WTC11 (cell line): ENCODE measurements at regions of chr14 and their contacts with region 1.

Region 1: DNA sequence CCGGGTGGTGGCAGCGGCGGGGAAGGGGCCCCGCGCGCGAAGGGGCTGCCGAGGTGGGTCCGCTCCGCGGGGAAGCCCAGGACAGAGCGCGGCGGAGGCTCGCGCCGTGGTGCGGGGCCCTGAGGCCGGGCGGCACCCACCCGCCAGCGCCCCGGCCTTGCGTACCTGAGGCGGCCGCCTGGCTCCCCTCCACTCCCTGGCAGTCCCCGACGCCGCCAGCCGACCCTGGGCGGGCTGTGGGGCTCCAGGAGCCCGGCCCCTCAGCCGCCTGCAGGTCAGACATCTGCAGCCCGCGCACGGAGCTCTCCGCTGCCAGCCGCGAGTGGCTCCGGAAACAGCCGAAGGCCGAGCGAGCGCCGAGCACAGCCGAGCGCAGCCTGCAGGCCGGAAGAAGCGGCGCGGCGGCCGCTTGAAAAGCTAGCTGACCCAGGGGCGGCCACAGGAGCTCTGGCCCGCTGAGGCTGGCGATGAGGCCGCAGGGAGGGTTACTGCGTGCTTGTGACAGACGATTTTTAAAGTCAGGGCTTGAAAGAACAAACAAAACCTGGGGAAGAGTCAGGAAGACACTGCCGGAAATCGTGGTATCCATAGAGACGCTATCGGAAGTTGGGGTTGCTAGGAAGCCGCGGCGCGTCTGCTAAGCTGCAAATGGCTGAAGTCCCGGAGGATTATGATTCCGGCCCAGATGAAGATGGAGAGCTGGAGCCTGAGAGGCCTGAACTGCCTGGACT is at the starts of genes SAMD15 and TMED8:
- DNase-seq: peak; percentile 85
- ATAC-seq: peak; percentile 99
- H3K4me3 Mint-ChIP-seq: peak within 1 kb of the TSS; percentile 85
- H3K27ac Mint-ChIP-seq: no peak within 1 kb of the TSS
- H3K4me1 Mint-ChIP-seq: peaks cover 9% of the 10 kb centered on the region
- H3K27me3 Mint-ChIP-seq: no peaks in the 10 kb centered on the region
- CTCF ChIP-seq: no peak
- total RNA-seq, gene SAMD15: 0.27 to 0.42 TPM (median 0.30 TPM) in 3 replicates
- total RNA-seq, gene TMED8: 12.8 to 14.2 TPM (median 13.4 TPM) in 3 replicates

Region 2: GRCh38 chr14:77320238-77320935 is 56.5 kb before region 1 on chr14 and contains the start of gene POMT2:
- CTCF ChIA-PET with region 1: interaction called, 19 read pairs
- POLR2A ChIA-PET with region 1: interaction called, 5 read pairs
- DNase-seq: peak; percentile 98
- ATAC-seq: peak; percentile 64
- H3K4me3 Mint-ChIP-seq: peak within 1 kb of the TSS; percentile 96
- H3K27ac Mint-ChIP-seq: peak within 1 kb of the TSS; percentile 100
- H3K4me1 Mint-ChIP-seq: peaks cover 46% of the 10 kb centered on the region
- H3K27me3 Mint-ChIP-seq: no peaks in the 10 kb centered on the region; the same call in 1 of the 2 replicates
- CTCF ChIP-seq: no peak
- total RNA-seq, gene POMT2: 31.3 to 38.7 TPM (median 35.2 TPM) in 3 replicates